ENCODE measurements at regions of chr12 and their contacts with region 1.

Region 1: GRCh38 chr12:54993161-54993835 is 8.7 kb upstream of the TESPA1 start:
- DNase-seq: peak; percentile 60
- H3K4me3 Mint-ChIP-seq: no peak overlapping the region
- H3K27ac Mint-ChIP-seq: no peak overlapping the region
- H3K4me1 Mint-ChIP-seq: peaks cover 40% of the 10 kb centered on the region
- H3K27me3 Mint-ChIP-seq: no peaks in the 10 kb centered on the region

Region 2: DNA sequence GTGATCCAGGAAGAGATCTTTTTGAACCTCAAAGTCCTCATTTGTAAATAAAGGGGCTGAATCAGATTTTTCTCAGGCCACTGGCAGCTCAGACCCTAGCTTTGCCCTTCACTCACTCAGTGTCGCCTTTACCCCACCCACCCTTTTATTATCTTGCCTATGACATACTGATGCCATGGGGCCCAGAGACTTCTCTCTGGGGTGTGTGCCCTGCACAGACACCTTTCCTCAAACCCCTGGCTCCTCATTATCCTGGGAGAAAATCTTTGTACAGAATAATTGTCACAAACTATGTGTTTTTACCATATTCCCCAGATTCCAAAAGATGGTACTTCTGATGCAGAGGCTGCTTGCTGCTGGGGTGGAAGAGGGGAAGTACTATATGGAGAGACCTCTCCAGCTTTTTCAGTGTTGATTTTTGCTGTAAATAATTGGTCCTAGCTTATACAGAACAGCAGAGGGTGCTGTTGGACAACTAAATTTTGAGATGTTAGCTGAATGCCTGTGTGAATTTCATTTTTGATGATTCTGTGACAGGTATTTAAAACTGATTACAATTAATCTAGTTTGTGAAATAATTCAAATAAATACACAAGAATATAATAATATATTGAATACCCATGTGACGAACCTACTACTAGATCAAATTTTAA is 291.2 kb before region 1 on chr12:
- CTCF ChIA-PET with region 1: interaction called, 15 read pairs
- POLR2A ChIA-PET with region 1: no interaction called
- DNase-seq: no peak
- H3K4me3 Mint-ChIP-seq: no peak overlapping the region
- H3K27ac Mint-ChIP-seq: no peak overlapping the region
- H3K4me1 Mint-ChIP-seq: no peaks in the 10 kb centered on the region
- H3K27me3 Mint-ChIP-seq: peaks cover 11% of the 10 kb centered on the region

Region 3: DNA sequence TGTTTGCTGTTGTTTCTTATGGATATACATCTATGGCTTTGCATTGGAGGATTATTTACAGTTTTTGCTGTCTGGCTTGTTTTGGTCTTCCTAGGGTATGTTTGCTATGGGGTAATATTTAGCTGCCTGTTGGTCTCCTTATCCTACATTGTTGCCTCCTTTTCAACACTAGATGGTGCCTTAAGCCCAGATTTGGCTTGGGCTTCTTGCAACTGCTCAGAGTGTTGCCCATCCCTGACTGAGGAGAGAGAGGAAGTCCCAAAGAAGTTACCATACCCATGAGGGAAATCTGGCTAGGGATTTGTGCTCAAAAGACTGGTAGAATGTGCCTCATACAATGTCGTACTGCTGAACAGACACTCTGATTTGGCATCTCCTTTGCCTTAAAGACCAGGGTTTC is 233.5 kb before region 1 on chr12:
- CTCF ChIA-PET with region 1: interaction called, 14 read pairs
- POLR2A ChIA-PET with region 1: no interaction called
- DNase-seq: peak; percentile 24
- H3K4me3 Mint-ChIP-seq: no peak overlapping the region
- H3K27ac Mint-ChIP-seq: no peak overlapping the region
- H3K4me1 Mint-ChIP-seq: peaks cover 11% of the 10 kb centered on the region
- H3K27me3 Mint-ChIP-seq: peaks cover 6% of the 10 kb centered on the region

Region 4: DNA sequence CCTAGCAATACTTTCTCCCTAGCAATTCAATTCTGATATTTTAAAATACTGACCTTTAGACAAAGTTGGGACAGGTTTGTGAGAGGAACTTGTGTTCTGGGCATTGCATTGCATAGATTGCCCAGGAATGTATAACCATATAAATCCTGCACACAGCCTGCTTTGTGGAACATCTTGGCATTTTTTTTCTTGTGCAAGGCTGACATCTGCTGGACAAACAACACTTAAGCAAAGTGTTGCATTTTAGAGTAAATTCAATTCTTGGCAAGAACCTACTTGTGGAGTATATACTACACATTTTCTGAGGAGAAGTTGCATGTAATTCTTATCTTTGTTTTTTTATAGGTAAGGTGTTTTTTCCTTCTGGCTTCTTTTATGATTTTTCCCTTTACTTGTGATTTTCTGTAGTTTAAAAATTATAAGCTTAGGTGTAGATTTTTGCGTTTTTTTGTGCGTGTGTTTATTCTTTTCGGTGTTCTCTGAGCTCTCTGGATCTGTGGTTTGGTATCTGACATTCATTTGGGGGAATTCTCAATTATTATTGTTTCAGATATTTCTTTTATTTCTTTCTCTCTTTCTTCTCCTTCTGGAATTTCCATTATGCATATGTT is 35.1 kb before region 1 on chr12:
- CTCF ChIA-PET with region 1: interaction called, 12 read pairs
- POLR2A ChIA-PET with region 1: no interaction called
- DNase-seq: peak; percentile 49
- H3K4me3 Mint-ChIP-seq: no peak overlapping the region
- H3K27ac Mint-ChIP-seq: no peak overlapping the region
- H3K4me1 Mint-ChIP-seq: peaks cover 73% of the 10 kb centered on the region
- H3K27me3 Mint-ChIP-seq: no peaks in the 10 kb centered on the region

Region 5: DNA sequence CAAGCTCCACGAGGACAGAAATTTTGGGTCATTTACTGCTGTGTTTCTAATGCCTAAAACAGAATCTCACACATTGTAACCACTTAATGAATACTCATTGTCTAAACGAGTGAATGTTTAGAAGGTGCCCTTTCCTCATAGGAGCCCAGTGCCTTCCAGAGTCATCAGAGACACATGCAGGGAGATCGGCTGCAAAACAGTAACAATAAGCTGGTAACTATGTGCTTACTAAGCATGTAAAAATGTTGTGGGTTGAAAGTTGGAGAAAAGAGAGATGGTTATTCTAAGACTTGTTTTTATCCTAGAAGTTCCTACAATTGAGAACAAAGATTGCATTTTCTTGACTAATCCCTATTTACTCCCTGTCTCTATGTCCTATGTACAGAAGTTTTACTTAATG is 16.1 kb before region 1 on chr12:
- CTCF ChIA-PET with region 1: interaction called, 40 read pairs
- POLR2A ChIA-PET with region 1: interaction called, 6 read pairs
- DNase-seq: no peak
- H3K4me3 Mint-ChIP-seq: peak overlapping the region; percentile 79
- H3K27ac Mint-ChIP-seq: peak overlapping the region; percentile 13
- H3K4me1 Mint-ChIP-seq: peaks cover 90% of the 10 kb centered on the region
- H3K27me3 Mint-ChIP-seq: no peaks in the 10 kb centered on the region

Region 6: DNA sequence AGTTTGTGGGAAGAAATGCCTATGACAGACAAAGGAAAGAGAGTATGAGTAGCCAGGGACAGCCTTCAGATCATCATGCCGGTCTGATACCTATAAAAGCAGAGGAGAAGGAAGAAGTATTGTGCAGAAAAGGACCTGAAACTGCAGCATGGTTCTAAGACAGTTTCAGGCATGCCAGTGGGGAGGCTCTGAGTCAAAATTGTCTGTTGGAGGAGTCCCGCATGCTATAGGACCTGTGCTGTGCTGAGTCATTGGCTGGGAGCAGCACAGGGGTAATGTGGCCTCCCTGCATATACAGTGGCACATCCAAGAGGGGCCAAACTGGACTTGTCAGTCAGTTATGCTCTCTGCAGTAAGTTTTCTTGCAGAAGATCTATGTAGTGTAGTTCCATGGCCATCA is 67.2 kb after region 1 on chr12:
- CTCF ChIA-PET with region 1: interaction called, 32 read pairs
- POLR2A ChIA-PET with region 1: interaction called, 3 read pairs
- DNase-seq: peak; percentile 40
- H3K4me3 Mint-ChIP-seq: no peak overlapping the region
- H3K27ac Mint-ChIP-seq: no peak overlapping the region
- H3K4me1 Mint-ChIP-seq: peaks cover 10% of the 10 kb centered on the region
- H3K27me3 Mint-ChIP-seq: peaks cover 4% of the 10 kb centered on the region